AG04449 (cell line): ENCODE measurements at regions of chr1 and their contacts with region 1.

Region 1: DNA sequence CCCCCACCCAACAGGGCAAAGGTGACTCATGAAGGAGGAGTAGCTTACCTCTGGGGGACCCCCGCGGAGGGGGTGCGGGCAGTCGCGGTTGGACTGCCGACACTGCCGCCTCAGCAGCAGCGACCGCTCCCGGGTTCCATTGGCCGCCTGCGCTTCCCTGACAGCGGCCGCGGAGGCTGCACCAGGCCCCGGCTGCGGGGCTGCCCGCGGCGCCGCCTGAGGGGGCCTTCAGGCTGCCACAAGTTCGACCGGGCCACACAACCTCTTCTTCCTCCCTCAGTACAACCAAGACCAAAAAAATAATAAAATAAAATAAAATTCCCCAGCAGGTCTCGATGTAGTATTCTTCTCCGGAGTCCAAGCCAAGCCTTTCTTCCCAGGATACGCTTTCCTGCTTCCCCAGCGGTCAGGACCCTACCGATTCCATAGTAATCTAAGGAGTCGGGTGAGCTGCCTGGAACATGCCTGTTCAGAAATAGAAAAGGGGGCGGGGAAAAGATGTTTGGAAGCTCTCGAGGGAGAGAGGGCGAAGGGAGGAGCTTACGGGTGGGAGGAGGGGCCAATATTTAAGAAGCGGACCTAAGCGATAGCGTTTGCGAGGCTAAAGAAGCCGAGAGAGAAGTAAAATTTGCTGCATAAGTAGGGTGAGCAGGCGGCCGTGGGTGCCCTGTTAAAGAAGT is at the start of gene PI4KB:
- DNase-seq: peak; percentile 82
- H3K4me3 ChIP-seq: peak within 1 kb of the TSS; percentile 81
- CTCF ChIP-seq: no peak

Region 2: GRCh38 chr1:151281969-151282882 is 45.1 kb before region 1 on chr1 and contains the start of gene ZNF687:
- CTCF ChIA-PET with region 1: no interaction called
- POLR2A ChIA-PET with region 1: interaction called, 17 read pairs
- DNase-seq: peak; percentile 100
- H3K4me3 ChIP-seq: peak within 1 kb of the TSS; percentile 97
- CTCF ChIP-seq: no peak

Region 3: GRCh38 chr1:151311589-151312331 is 15.6 kb before region 1 on chr1:
- CTCF ChIA-PET with region 1: interaction called, 47 read pairs
- POLR2A ChIA-PET with region 1: interaction called, 28 read pairs
- DNase-seq: peak; percentile 95
- H3K4me3 ChIP-seq: no peak overlapping the region
- CTCF ChIP-seq: no peak

Region 4: DNA sequence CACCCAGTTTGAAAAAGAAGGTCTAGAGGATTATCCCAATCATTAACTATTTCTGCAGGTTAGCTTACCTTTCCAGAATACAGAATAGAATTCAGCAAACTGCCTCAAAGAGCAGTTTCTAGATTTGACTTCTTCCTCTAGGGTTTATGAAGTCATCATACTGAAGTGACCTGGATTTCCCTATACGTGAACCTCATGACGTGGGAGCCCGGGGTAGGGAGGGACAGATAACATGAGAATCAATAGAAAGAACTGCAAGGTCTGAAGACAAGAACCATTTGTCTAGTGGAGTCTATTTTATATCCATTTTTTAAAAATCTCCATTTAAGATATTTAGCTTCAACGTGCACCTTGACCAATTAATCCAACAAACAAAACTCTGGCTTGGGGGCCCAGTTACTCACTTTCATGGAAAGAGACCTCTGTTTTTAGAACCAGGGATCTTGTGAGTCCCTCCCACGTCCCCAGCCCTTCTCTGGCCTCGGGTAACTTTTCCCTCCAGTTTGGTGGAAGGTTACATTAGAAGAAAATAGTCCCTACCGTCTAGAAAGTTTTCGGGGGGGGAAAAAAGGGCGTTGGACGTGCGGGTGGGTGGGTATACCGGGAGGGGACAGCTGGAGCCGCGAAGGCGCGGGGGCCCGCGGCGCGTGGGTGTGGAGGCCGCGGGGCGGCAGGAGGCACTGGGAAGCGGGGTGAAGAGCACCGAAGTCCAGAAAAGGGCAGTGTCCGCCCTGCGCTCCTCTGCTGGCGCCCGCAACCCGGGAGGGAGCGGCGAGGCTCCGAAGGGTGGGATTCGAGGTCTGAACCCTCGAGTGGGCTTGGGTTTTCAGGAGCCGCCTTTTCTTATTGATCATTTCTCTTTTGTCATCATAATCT is 145.7 kb after region 1 on chr1:
- CTCF ChIA-PET with region 1: no interaction called
- POLR2A ChIA-PET with region 1: no interaction called
- DNase-seq: no peak
- H3K4me3 ChIP-seq: peak overlapping the region; percentile 46
- CTCF ChIP-seq: no peak